MCF 10A (cell line): ENCODE measurements at regions of chr1 and their contacts with region 1.

Region 1: GRCh38 chr1:78114034-78114956 is 68.5 kb downstream of the GIPC2 start:
- DNase-seq: peak; percentile 84
- H3K4me3 Mint-ChIP-seq: no peak overlapping the region
- H3K27ac Mint-ChIP-seq: peak overlapping the region; percentile 47
- H3K4me1 Mint-ChIP-seq: peaks cover 6% of the 10 kb centered on the region
- H3K27me3 Mint-ChIP-seq: no peaks in the 10 kb centered on the region
- CTCF ChIP-seq: peak; percentile 91

Region 2: DNA sequence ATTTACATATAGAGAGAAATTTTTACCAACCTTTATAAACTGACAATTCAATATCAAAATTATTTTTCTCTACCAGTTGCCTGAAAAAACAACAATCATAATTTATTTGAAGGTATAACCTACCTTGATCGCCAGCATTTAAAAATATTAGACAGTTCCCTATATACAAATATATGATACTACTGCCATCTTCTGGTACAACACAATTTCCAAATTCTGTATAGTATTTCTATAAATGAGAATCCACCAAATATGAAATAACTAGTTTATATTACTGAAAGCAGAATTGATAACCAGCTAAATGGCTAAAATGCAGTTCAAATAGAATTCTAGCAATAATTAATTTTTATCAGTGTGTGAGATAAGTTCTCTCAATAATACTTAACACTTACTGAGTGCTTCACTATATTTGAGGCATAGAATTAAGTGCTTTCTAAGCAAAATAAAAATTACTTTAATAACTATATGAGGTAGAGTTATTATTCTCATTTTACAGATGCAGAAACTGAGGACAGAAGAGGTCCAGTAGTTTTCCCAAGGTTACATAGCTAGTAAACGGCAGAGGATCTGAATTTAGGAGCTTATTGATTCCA is 970.7 kb before region 1 on chr1:
- CTCF ChIA-PET with region 1: interaction called, 3 read pairs
- POLR2A ChIA-PET with region 1: no interaction called
- intact Hi-C with region 1: loop called (anchors 1 kb)
- DNase-seq: peak; percentile 8
- H3K4me3 Mint-ChIP-seq: no peak overlapping the region
- H3K27ac Mint-ChIP-seq: no peak overlapping the region
- H3K4me1 Mint-ChIP-seq: no peaks in the 10 kb centered on the region
- H3K27me3 Mint-ChIP-seq: no peaks in the 10 kb centered on the region
- CTCF ChIP-seq: peak; percentile 36

Region 3: DNA sequence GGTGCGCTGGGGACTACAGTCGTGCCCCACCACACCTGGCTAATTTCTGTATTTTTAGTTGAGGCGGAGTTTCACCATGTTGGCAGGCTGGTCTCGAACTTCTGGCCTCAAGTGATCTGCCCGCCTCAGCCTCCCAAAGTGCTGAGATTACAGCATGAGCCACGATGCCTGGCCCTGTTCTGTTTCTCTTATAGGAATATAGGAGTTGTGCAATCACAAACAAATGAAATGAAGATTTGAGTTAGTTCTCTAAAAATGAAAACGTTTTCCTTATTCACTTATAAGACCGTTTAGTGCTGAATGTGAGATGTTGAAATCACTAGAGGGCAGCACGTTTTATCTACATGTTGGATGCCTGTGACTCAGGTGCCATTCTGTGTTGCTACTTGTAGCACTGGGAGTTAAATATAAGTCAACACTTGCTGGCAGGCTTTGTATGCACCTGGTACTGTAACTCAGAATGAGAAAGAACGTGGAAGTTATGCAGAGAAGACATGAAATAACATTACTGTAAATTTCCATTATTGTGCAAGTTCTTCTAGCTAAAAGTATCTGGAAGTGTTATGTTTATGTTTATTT is 289.1 kb before region 1 on chr1:
- CTCF ChIA-PET with region 1: interaction called, 17 read pairs
- POLR2A ChIA-PET with region 1: no interaction called
- intact Hi-C with region 1: loop called (anchors 1 kb)
- DNase-seq: peak; percentile 91
- H3K4me3 Mint-ChIP-seq: peak overlapping the region; percentile 29
- H3K27ac Mint-ChIP-seq: peak overlapping the region; percentile 90
- H3K4me1 Mint-ChIP-seq: peaks cover 6% of the 10 kb centered on the region
- H3K27me3 Mint-ChIP-seq: no peaks in the 10 kb centered on the region
- CTCF ChIP-seq: peak; percentile 24

Region 4: GRCh38 chr1:77978969-77979876 is 135.1 kb before region 1 on chr1 and contains the start of gene FUBP1:
- CTCF ChIA-PET with region 1: interaction called, 70 read pairs
- POLR2A ChIA-PET with region 1: interaction called, 72 read pairs
- intact Hi-C with region 1: loop called (anchors 1 kb)
- DNase-seq: peak; percentile 99
- H3K4me3 Mint-ChIP-seq: no peak within 1 kb of the TSS
- H3K27ac Mint-ChIP-seq: no peak within 1 kb of the TSS
- H3K4me1 Mint-ChIP-seq: peaks cover 23% of the 10 kb centered on the region
- H3K27me3 Mint-ChIP-seq: no peaks in the 10 kb centered on the region
- CTCF ChIP-seq: peak; percentile 68
- total RNA-seq, gene FUBP1: 156 and 169 TPM in 2 replicates

Region 5: DNA sequence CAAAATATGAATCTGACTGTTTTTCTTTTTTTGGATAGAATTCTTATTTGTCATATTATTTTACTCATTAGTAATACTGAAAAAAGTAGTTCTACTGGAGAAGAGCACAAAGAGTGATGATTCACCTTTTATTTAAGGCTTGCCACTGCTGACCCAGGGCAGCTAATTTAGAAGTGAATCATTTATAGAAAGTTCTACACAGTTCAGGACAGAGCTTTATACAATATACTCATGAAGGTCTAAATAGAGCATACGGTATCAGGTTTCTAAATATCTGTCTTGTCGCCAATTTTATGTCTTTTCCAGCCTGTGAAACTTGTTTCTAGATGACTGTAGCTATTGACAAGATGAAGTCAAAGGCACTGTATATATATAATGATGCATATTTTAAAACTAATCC is 43.5 kb before region 1 on chr1:
- CTCF ChIA-PET with region 1: interaction called, 5 read pairs
- POLR2A ChIA-PET with region 1: interaction called, 13 read pairs
- intact Hi-C with region 1: no loop called
- DNase-seq: peak; percentile 69
- H3K4me3 Mint-ChIP-seq: no peak overlapping the region
- H3K27ac Mint-ChIP-seq: no peak overlapping the region
- H3K4me1 Mint-ChIP-seq: peaks cover 14% of the 10 kb centered on the region
- H3K27me3 Mint-ChIP-seq: no peaks in the 10 kb centered on the region
- CTCF ChIP-seq: no peak

Region 6: DNA sequence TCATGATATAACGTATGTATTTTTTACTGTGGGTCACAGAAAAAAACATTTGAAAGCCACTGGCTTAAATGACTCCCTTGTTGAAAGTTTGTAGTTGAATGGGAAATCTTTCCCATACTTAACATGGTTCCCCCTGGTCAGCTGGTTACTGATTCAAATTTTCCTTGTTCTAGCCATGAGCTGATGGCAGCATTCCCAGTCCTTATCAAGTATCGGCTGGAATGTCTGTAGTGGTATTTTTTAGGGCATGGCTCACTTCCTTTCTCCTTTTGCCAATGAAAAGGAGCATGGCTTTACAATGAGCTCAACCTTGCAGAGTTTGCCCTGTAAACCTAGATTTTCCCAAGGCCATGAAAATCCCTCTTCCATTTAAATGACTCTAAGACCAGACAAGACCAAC is 12.8 kb before region 1 on chr1:
- CTCF ChIA-PET with region 1: interaction called, 24 read pairs
- POLR2A ChIA-PET with region 1: interaction called, 6 read pairs
- intact Hi-C with region 1: no loop called
- DNase-seq: peak; percentile 45
- H3K4me3 Mint-ChIP-seq: no peak overlapping the region
- H3K27ac Mint-ChIP-seq: peak overlapping the region; percentile 35
- H3K4me1 Mint-ChIP-seq: peaks cover 14% of the 10 kb centered on the region
- H3K27me3 Mint-ChIP-seq: no peaks in the 10 kb centered on the region
- CTCF ChIP-seq: no peak